ENCODE measurements at regions of chr5 and their contacts with region 1.

Region 1: GRCh38 chr5:39202597-39203274 is 16.6 kb downstream of the FYB1 start:
- DNase-seq: peak in 2 of 4 experiments; percentile 40 to 46
- ATAC-seq: peak; percentile 30
- H3K4me3 ChIP-seq: peak overlapping the region; percentile 22; the same call in 1 of the 2 replicates
- H3K27ac ChIP-seq: peak overlapping the region; percentile 61; the same call in 2 of the 3 replicates
- H3K4me1 ChIP-seq: peaks cover 7 to 26% of the 10 kb centered on the region in 2 experiments; a peak in 4 of 5 replicates
- H3K27me3 ChIP-seq: no peaks in the 10 kb centered on the region
- CTCF ChIP-seq: no peak
- EP300 ChIP-seq: peak; percentile 17; the same call in 1 of the 2 replicates
- POLR2A ChIP-seq: no peak
- RAD21 ChIP-seq: no peak

Region 2: DNA sequence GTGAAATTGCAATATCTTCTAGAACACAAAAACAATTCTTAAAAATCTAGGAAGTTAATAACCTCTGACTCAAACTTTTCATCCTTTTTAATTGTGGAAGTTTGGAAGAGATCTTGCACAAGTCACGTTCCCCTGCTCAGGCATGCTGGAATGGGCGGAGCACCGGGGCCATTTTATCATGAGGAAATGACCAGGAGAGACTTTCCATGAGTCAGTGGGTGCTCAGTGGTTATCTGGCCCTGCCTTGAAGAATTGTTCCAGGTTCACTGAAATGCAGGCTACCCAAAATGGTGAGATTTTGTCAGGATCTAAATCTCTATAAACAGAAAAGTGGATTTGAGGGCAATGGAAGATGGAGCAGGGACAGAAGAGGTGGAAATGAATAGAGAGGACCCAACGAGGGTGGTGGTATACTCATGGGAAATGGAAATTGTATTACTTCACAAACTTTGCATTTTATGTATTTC is 44.6 kb before region 1 on chr5:
- CTCF ChIA-PET with region 1: interaction called, 3 read pairs
- POLR2A ChIA-PET with region 1: no interaction called
- in situ Hi-C with region 1: no loop called
- intact Hi-C with region 1: loop called (anchors 5 kb)
- DNase-seq: peak; percentile 40 to 90 (median 64)
- ATAC-seq: peak; percentile 92
- H3K4me3 ChIP-seq: no peak overlapping the region
- H3K27ac ChIP-seq: peak overlapping the region; percentile 63
- H3K4me1 ChIP-seq: peaks cover 0 to 35% of the 10 kb centered on the region in 2 experiments; a peak in 4 of 5 replicates
- H3K27me3 ChIP-seq: no peaks in the 10 kb centered on the region
- CTCF ChIP-seq: no peak
- EP300 ChIP-seq: peak; percentile 77; the same call in 1 of the 2 replicates
- POLR2A ChIP-seq: no peak
- RAD21 ChIP-seq: peak; percentile 8 to 23; a peak in 1 of 4 replicates

Region 3: DNA sequence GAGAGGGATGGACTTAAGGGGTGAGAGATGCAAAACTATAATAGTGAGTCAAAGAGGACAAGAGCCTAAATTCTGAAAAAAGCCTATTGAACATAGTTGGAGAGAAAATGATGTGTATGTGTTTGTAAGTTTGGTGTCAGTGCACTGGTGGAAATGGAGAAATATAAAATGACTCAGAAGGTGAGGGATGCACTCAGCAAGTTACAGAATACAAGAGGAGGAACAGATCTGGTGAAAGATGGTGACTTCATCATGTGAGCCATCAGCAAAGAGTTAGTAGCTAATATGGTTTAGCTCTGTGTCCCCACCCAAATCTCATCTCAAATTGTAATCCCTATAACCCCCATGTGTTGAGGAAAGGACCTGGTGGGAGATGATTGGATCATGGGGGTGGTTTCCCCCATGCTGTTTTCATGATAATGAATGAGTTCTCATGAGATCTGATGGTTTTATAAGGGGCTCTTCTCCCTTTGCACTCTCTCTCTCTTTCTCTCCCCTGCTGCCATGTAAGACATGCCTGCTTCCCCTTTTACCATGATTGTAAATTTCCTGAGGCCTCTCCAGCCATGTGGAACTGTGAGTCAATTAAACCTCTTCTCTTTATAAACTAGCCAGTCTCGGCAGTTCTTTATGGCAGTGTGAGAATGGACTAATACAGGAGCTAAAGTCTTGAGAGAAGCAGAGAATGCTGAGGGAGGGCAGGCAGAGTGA is 47.0 kb after region 1 on chr5:
- CTCF ChIA-PET with region 1: no interaction called
- POLR2A ChIA-PET with region 1: no interaction called
- in situ Hi-C with region 1: no loop called
- intact Hi-C with region 1: no loop called
- DNase-seq: no peak
- ATAC-seq: peak; percentile 26; the same call in 2 of the 3 replicates
- H3K4me3 ChIP-seq: no peak overlapping the region
- H3K27ac ChIP-seq: no peak overlapping the region
- H3K4me1 ChIP-seq: no peaks in the 10 kb centered on the region; a peak in 1 of 5 replicates
- H3K27me3 ChIP-seq: no peaks in the 10 kb centered on the region
- CTCF ChIP-seq: no peak
- EP300 ChIP-seq: no peak
- POLR2A ChIP-seq: no peak
- RAD21 ChIP-seq: no peak

Region 4: DNA sequence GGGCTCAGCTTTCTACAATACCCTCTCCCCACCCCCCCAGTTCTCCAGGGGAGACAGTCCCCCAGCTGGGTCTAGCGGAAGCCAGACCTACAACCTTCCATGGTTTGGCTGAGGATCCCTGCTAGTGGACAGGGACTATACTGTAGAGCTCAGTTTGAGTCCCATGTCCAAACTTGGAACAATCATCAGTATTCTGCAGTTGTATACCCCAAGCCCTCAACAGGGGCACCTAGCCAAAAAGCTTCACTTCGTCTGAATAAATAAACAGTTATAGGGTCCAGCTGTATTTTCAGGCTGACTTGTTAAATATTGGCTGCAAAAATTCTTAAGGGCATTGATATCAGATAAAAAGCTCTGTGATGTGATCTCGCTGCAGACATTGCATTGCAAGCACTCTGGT is 177.0 kb after region 1 on chr5:
- CTCF ChIA-PET with region 1: no interaction called
- POLR2A ChIA-PET with region 1: no interaction called
- in situ Hi-C with region 1: no loop called
- intact Hi-C with region 1: no loop called
- DNase-seq: no peak
- ATAC-seq: no peak
- H3K4me3 ChIP-seq: no peak overlapping the region
- H3K27ac ChIP-seq: no peak overlapping the region
- H3K4me1 ChIP-seq: no peaks in the 10 kb centered on the region
- H3K27me3 ChIP-seq: no peaks in the 10 kb centered on the region
- CTCF ChIP-seq: no peak
- EP300 ChIP-seq: no peak
- POLR2A ChIP-seq: no peak
- RAD21 ChIP-seq: no peak

Region 5: DNA sequence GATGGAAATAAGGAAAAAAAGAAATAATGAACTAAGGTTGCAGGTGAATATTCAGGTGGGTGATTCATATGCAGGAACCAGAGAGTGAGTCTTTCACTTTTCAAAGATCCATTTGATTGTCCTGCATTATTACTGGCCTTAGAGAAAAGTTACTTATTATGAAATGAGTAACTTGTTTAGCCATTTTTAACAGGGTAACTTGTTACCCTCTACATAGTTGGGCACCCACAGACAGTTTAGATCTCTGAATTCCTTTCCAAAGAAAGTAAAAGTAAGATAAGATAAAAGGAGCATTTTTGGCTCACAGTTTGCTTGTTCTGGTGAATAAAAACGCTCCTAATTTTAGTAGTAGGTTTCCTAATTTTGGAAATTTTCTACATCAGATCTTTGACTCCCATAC is 276.1 kb after region 1 on chr5:
- CTCF ChIA-PET with region 1: no interaction called
- POLR2A ChIA-PET with region 1: no interaction called
- in situ Hi-C with region 1: no loop called
- intact Hi-C with region 1: no loop called
- DNase-seq: no peak
- ATAC-seq: no peak
- H3K4me3 ChIP-seq: no peak overlapping the region
- H3K27ac ChIP-seq: no peak overlapping the region
- H3K4me1 ChIP-seq: no peaks in the 10 kb centered on the region
- H3K27me3 ChIP-seq: peaks cover 2 to 5% of the 10 kb centered on the region in 2 experiments; a peak in 2 of 5 replicates
- CTCF ChIP-seq: no peak
- EP300 ChIP-seq: no peak
- POLR2A ChIP-seq: no peak
- RAD21 ChIP-seq: no peak

Region 6: GRCh38 chr5:39578887-39579497 is 376.3 kb after region 1 on chr5:
- CTCF ChIA-PET with region 1: no interaction called
- POLR2A ChIA-PET with region 1: no interaction called
- in situ Hi-C with region 1: no loop called
- intact Hi-C with region 1: no loop called
- DNase-seq: peak in 1 of 4 experiments; percentile 25
- ATAC-seq: no peak
- H3K4me3 ChIP-seq: no peak overlapping the region
- H3K27ac ChIP-seq: no peak overlapping the region
- H3K4me1 ChIP-seq: no peaks in the 10 kb centered on the region
- H3K27me3 ChIP-seq: no peaks in the 10 kb centered on the region
- CTCF ChIP-seq: peak in 2 of 3 experiments; percentile 21 to 73; a peak in 3 of 6 replicates
- EP300 ChIP-seq: no peak
- POLR2A ChIP-seq: no peak
- RAD21 ChIP-seq: peak; percentile 73 to 75